ENCODE measurements at regions of chr2 and their contacts with region 1.

Region 1: DNA sequence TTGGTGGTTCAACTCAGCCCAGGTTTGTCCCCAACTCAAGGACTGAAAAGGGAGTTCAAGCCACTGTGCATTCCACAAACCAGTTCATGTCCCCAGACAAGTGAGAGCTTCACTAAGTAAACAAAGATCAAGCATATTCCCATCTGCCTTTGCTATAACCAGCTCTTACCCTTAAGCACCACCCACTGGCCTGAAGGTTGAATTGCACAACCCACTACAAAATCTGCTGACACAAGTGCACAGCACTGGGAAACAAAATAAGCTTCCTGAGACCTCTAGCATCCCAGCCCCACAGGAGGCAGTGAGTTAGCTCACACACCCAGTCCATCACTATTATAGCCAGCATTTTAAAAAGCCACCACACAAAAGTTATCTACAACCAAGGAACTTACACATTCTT is 516.6 kb downstream of the NR4A2 start:
- DNase-seq: peak in 4 of 10 donors; percentile 29 to 52 (median 34)
- H3K4me3 ChIP-seq: no peak overlapping the region
- H3K27ac ChIP-seq: no peak overlapping the region
- H3K27me3 ChIP-seq: no peaks in the 10 kb centered on the region
- CTCF ChIP-seq: peak in 51 of 56 donors; percentile 21 to 75 (median 50)

Region 2: DNA sequence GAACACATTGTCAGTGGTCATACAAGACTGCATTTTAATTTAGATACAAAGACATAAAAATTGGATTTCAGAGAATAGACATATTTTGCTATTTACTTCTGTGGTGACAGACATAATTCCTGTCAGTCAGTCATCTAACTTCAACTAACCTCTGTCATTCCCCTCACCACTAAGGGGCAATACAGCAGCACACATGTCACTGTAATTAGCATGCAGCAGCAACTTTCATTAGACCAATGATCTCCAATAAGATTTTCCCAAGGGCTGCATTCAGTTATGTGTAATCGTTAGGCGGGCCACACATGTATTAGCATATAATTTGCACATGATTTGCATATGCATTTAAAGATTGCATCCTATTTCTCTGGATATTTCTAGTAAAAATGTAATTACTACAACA is 107.8 kb before region 1 on chr2:
- intact Hi-C with region 1: loop called in 1 of 2 experiments (anchors 10 kb)
- DNase-seq: no peak
- H3K4me3 ChIP-seq: no peak overlapping the region
- H3K27ac ChIP-seq: no peak overlapping the region
- H3K27me3 ChIP-seq: no peaks in the 10 kb centered on the region
- CTCF ChIP-seq: peak in 44 of 56 donors; percentile 10 to 67 (median 38)